Activated B cell treated with CpG ODN at 0.5 μM for 24 hours (primary cell): ENCODE measurements at regions of chr11 and their contacts with region 1.

Region 1: DNA sequence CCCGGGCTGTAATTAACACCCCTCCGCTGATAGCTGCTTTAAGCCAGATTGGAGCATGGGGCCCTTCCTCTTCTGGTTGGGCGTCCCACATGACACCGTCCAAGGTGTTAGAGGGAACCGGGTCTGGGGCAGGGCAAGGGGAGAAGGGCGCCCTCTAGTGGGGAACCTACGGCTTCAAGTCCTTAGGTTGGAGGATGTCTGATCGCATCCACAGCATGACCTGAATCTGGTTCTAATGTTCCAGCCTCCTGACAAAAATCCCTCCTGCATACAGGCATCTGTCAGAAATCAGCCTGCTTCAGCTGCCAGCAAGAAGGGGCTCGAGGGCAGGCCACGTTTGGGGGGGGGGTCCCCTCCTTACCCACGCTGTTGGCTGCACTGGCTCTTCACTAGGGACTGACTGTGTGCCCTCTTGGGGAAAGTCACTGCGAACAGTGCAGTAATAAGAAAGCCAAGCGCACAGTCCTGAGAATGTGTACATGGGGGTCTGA is 94.2 kb upstream of the TBCEL start:
- DNase-seq: no peak
- ATAC-seq: no peak
- H3K4me3 Mint-ChIP-seq: no peak overlapping the region
- H3K27ac Mint-ChIP-seq: no peak overlapping the region
- H3K4me1 Mint-ChIP-seq: peaks cover 16% of the 10 kb centered on the region
- H3K27me3 Mint-ChIP-seq: peaks cover 16% of the 10 kb centered on the region
- CTCF ChIP-seq: no peak

Region 2: GRCh38 chr11:120883404-120884080 is 46.2 kb before region 1 on chr11:
- CTCF ChIA-PET with region 1: no interaction called
- POLR2A ChIA-PET with region 1: no interaction called
- intact Hi-C with region 1: no loop called
- DNase-seq: no peak
- ATAC-seq: no peak
- H3K4me3 Mint-ChIP-seq: no peak overlapping the region
- H3K27ac Mint-ChIP-seq: no peak overlapping the region
- H3K4me1 Mint-ChIP-seq: no peaks in the 10 kb centered on the region
- H3K27me3 Mint-ChIP-seq: peaks cover 32% of the 10 kb centered on the region
- CTCF ChIP-seq: no peak

Region 3: DNA sequence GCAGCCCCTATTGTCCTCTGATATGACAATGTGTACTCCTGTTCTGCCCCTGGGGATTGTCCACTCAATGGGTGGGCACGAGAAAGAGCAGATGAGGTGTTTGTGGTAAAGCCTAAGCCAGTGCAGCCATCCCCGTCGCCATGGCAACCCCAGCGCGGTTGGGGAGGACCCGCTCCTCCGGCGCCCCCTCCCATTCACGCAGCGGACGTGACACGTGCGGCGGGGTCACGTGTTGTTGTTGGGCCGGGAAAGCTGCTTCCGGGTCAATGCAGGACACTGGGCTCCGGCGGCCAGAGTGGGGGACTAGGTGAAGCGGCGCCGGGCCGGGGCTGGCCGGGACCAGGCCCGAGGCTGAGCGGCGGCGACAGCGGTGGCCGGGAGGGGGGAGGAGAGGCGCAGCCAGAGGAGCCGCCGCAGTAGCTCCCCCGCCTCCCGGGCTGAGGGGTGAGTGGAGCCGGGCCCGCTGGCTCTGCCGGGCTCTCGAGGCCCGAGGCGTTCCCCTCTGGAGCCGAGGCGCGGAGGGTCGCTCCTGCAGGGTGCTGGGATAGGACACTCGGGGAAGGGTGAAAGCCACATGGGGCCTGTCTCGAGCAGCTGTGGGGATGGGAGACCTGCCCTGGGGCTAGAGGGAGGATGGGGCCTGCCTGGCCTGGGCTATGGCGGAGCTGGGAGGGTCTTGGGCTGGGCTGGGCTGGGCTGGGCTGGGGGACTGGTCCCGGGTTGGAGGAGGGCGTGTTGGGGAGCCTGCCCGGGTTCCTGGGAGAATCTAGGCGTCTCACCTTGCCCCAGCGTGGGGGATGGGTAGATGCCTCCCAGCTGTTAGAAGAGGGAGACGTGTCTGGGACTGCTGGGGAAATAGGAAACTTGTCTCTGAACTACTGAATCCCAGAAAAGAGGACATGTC is 94.4 kb after region 1 on chr11 and contains the start of gene TBCEL:
- CTCF ChIA-PET with region 1: no interaction called
- POLR2A ChIA-PET with region 1: no interaction called
- intact Hi-C with region 1: loop called (anchors 5 kb)
- DNase-seq: peak; percentile 75
- ATAC-seq: peak; percentile 85
- H3K4me3 Mint-ChIP-seq: peak within 1 kb of the TSS; percentile 90
- H3K27ac Mint-ChIP-seq: peak within 1 kb of the TSS; percentile 46
- H3K4me1 Mint-ChIP-seq: peaks cover 21% of the 10 kb centered on the region
- H3K27me3 Mint-ChIP-seq: peaks cover 10% of the 10 kb centered on the region
- CTCF ChIP-seq: no peak
- total RNA-seq, gene TBCEL: 16.5 and 17.9 TPM in 2 replicates

Region 4: DNA sequence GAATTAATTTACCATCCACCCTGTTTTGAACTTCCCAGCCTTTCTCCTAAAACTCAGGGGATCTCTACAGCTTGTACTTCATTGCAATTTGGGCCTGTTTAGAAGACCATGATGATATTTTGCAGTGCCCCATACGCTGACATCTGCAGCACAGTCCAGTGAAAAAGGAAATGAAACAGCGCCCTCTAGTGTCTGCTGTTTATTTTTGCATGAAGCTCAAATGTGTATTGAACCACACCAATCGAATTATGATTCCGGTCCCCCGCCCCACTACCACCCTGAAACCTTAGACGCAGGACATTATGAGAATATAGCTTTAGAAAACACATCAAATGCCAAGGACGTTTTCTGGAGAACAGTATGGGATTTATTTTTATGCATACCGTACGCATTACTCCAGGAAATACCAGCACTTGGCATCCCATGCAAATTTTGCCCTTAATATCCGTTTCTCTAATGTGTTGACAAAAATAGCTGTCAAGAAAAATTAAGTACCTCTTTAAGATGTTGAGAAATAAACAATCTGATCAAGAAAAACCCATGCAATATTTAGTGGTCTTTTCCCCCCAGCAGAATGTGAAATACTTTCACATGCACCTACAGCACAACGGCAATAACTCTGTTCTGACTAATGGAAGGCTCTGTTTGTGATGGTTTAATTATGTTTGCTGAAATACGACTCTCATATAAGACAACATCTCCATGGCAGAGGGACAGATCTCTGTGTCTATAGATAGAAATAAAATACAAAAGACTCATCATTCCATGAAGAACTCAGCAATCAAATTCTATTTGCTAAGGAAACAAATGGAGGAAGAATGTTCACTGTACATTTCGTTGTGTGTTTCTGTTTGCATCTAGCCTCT is 265.3 kb after region 1 on chr11:
- CTCF ChIA-PET with region 1: no interaction called
- POLR2A ChIA-PET with region 1: no interaction called
- intact Hi-C with region 1: loop called (anchors 5 kb)
- DNase-seq: no peak
- ATAC-seq: peak; percentile 52
- H3K4me3 Mint-ChIP-seq: no peak overlapping the region
- H3K27ac Mint-ChIP-seq: no peak overlapping the region
- H3K4me1 Mint-ChIP-seq: peaks cover 6% of the 10 kb centered on the region
- H3K27me3 Mint-ChIP-seq: peaks cover 25% of the 10 kb centered on the region
- CTCF ChIP-seq: no peak